Spleen (tissue), 13 donors: ENCODE measurements at regions of chr14 and their contacts with region 1.

Region 1: GRCh38 chr14:29536886-29537511 is 390.6 kb downstream of the PRKD1 start:
- DNase-seq: no peak
- H3K4me3 ChIP-seq: no peak overlapping the region
- H3K27ac ChIP-seq: no peak overlapping the region
- H3K4me1 ChIP-seq: no peaks in the 10 kb centered on the region
- H3K27me3 ChIP-seq: no peaks in the 10 kb centered on the region
- CTCF ChIP-seq: peak in 4 of 11 experiments; percentile 10 to 21 (median 14)
- POLR2A ChIP-seq: no peak

Region 2: GRCh38 chr14:28651148-28651547 is 885.9 kb before region 1 on chr14:
- intact Hi-C with region 1: no loop called
- DNase-seq: no peak
- H3K4me3 ChIP-seq: no peak overlapping the region
- H3K27ac ChIP-seq: no peak overlapping the region
- H3K4me1 ChIP-seq: no peaks in the 10 kb centered on the region
- H3K27me3 ChIP-seq: no peaks in the 10 kb centered on the region
- CTCF ChIP-seq: no peak
- POLR2A ChIP-seq: no peak

Region 3: GRCh38 chr14:28751467-28752058 is 785.4 kb before region 1 on chr14:
- intact Hi-C with region 1: loop called (anchors 5 kb)
- DNase-seq: no peak
- H3K4me3 ChIP-seq: no peak overlapping the region
- H3K27ac ChIP-seq: no peak overlapping the region
- H3K4me1 ChIP-seq: peaks cover 0 to 5% (median 0%) of the 10 kb centered on the region in 6 donors
- H3K27me3 ChIP-seq: peaks cover 0 to 65% (median 29%) of the 10 kb centered on the region in 7 donors
- CTCF ChIP-seq: peak in 5 of 11 experiments; percentile 11 to 47 (median 45)
- POLR2A ChIP-seq: no peak

Region 4: DNA sequence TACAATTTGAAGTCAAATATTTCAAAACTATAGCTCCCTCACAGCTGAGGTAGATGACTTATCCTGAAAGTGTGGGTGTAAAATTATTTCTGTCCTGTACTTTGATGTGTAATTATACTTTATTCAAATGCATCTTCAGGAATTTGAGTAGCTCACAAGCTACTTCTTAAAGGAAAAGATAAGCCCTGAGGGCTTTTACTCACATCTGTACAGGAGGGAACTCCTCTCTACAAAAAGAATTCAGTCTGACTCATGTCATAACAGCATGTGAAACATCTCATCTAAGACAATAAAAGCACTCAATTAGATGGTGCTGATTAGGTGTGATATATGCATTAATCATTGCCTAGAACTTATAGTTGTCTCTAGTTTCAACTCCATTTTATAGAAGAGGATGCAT is 61.4 kb before region 1 on chr14:
- intact Hi-C with region 1: no loop called
- DNase-seq: no peak
- H3K4me3 ChIP-seq: no peak overlapping the region
- H3K27ac ChIP-seq: no peak overlapping the region
- H3K4me1 ChIP-seq: no peaks in the 10 kb centered on the region
- H3K27me3 ChIP-seq: no peaks in the 10 kb centered on the region
- CTCF ChIP-seq: no peak
- POLR2A ChIP-seq: no peak